GM13976 (cell line): ENCODE measurements at regions of chrX and their contacts with region 1.

Region 1: DNA sequence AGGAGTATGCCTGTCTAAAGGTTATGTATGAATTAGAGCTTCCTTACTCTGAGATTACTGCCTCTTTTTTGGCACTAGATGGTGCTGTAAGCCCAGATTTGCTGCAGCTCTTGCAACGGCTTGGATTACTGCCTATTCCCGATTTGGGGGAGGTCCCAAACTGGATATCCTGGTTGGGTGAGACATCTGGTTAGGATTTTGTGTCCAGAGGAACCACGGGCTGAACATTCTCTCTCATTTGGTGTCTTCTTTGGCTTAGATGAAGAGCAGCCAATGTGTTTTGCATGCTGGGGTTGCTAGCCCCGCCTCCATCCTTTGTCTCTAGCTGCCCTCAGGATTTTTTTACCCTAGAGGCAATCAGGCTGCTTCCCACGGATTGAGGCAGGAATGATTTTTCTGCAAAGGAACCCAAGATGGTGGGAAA is 31.9 kb downstream of the F8A1 start:
- DNase-seq: peak; percentile 36
- CTCF ChIP-seq: peak; percentile 44

Region 2: GRCh38 chrX:154804957-154805695 is 112.9 kb before region 1 on chrX and contains the start of gene MPP1:
- in situ Hi-C with region 1: loop called (anchors 25 kb)
- DNase-seq: peak; percentile 90
- CTCF ChIP-seq: no peak